ENCODE measurements at regions of chr19 and their contacts with region 1.

Region 1: GRCh38 chr19:35140962-35141637 is 2.0 kb upstream of the FXYD7 start:
- DNase-seq: peak; percentile 98
- ATAC-seq: peak; percentile 96
- H3K4me3 Mint-ChIP-seq: peak overlapping the region; percentile 74
- H3K27ac Mint-ChIP-seq: peak overlapping the region; percentile 26
- H3K4me1 Mint-ChIP-seq: peaks cover 32% of the 10 kb centered on the region
- H3K27me3 Mint-ChIP-seq: peaks cover 7% of the 10 kb centered on the region
- CTCF ChIP-seq: peak; percentile 39

Region 2: DNA sequence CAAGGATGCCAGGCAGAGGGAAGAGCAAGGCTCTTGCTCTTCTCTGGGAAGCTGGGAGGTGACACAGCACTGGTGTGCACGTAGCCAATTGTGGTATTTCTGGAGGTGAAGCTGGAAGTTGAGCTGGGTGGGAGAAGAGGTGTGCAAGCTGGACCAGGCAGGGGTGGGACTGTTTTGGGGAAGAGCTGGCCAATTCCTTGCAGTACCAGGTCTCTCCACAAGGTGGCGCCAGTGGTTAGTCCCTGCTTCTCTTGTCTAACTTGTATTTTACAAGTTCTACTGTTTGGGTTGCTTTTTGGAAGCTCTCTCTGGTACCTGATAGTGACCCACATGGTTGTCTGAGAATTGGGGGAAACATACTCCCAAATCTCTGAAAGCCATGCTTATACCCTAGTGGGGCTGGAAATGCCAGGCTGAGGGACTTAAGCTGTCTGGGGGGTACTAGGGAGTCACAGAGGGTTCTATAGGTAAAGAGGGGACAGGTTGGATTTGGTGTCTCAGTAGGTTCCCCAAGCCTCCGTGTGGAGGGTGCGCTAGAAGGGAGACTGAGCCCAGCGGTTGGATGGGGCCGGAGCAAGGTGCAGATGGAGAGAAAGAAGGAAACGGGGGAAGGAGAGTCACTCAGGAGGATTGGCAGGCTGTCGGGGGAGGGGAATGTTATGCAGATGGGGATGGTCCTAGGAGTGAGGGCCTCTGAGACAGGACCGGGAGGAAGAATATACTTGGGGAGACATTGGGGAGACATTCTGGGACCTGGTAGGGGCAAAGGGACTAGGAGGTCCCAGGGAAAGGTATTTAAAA is 96.6 kb before region 1 on chr19:
- CTCF ChIA-PET with region 1: interaction called, 12 read pairs
- POLR2A ChIA-PET with region 1: interaction called, 3 read pairs
- intact Hi-C with region 1: no loop called
- DNase-seq: peak; percentile 69
- ATAC-seq: no peak
- H3K4me3 Mint-ChIP-seq: no peak overlapping the region
- H3K27ac Mint-ChIP-seq: no peak overlapping the region
- H3K4me1 Mint-ChIP-seq: peaks cover 13% of the 10 kb centered on the region
- H3K27me3 Mint-ChIP-seq: peaks cover 6% of the 10 kb centered on the region
- CTCF ChIP-seq: peak; percentile 98

Region 3: GRCh38 chr19:35055715-35056179 is 85.4 kb before region 1 on chr19:
- CTCF ChIA-PET with region 1: interaction called, 10 read pairs
- POLR2A ChIA-PET with region 1: no interaction called
- intact Hi-C with region 1: no loop called
- DNase-seq: peak; percentile 46
- ATAC-seq: peak; percentile 66
- H3K4me3 Mint-ChIP-seq: no peak overlapping the region
- H3K27ac Mint-ChIP-seq: no peak overlapping the region
- H3K4me1 Mint-ChIP-seq: no peaks in the 10 kb centered on the region
- H3K27me3 Mint-ChIP-seq: no peaks in the 10 kb centered on the region
- CTCF ChIP-seq: peak; percentile 14

Region 4: DNA sequence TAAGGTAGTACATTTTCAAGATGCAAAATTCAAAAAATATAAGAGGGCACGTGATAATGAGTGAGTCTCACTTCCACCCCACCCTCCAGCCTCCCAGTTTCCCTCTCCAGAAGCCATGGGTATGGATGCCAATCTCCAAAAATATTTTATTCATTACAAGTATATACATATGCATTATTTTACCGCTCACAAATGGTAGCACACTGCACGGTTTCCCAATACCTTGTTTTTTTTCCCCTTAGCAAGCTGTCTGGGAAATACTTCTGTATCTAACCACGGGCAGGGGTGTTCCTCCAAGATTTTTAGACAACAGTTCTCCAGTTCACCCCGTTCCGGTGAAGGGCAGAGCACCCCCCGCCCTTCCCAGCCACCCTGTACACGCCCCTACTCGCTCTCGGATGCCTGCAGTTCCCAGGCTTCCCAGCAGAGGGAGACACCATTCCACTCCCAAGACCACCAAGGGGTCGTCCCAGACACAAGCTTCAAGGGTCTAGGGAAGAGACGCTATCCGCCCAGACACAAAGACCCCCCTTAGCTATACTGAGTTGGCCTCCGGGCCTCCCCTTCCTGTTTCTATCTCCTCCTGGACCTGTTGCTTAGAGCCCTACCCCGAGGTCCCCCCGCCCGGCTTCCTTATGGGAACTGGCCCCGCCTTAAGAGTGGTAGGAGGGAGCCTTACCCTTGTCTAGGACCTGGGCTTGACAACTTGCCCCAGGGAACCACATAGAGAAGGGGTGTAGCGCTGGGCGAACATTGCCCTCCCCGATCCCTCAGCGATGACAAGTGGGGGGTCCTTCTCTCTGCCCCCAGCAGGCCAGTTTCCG is 26.5 kb before region 1 on chr19:
- CTCF ChIA-PET with region 1: interaction called, 11 read pairs
- POLR2A ChIA-PET with region 1: no interaction called
- intact Hi-C with region 1: no loop called
- DNase-seq: peak; percentile 82
- ATAC-seq: peak; percentile 97
- H3K4me3 Mint-ChIP-seq: peak overlapping the region; percentile 19
- H3K27ac Mint-ChIP-seq: no peak overlapping the region
- H3K4me1 Mint-ChIP-seq: peaks cover 5% of the 10 kb centered on the region
- H3K27me3 Mint-ChIP-seq: no peaks in the 10 kb centered on the region
- CTCF ChIP-seq: peak; percentile 99

Region 5: GRCh38 chr19:35130761-35131735 is 10.1 kb before region 1 on chr19:
- CTCF ChIA-PET with region 1: no interaction called
- POLR2A ChIA-PET with region 1: no interaction called
- intact Hi-C with region 1: no loop called
- DNase-seq: no peak
- ATAC-seq: no peak
- H3K4me3 Mint-ChIP-seq: no peak overlapping the region
- H3K27ac Mint-ChIP-seq: no peak overlapping the region
- H3K4me1 Mint-ChIP-seq: peaks cover 4% of the 10 kb centered on the region
- H3K27me3 Mint-ChIP-seq: no peaks in the 10 kb centered on the region
- CTCF ChIP-seq: no peak

Region 6: DNA sequence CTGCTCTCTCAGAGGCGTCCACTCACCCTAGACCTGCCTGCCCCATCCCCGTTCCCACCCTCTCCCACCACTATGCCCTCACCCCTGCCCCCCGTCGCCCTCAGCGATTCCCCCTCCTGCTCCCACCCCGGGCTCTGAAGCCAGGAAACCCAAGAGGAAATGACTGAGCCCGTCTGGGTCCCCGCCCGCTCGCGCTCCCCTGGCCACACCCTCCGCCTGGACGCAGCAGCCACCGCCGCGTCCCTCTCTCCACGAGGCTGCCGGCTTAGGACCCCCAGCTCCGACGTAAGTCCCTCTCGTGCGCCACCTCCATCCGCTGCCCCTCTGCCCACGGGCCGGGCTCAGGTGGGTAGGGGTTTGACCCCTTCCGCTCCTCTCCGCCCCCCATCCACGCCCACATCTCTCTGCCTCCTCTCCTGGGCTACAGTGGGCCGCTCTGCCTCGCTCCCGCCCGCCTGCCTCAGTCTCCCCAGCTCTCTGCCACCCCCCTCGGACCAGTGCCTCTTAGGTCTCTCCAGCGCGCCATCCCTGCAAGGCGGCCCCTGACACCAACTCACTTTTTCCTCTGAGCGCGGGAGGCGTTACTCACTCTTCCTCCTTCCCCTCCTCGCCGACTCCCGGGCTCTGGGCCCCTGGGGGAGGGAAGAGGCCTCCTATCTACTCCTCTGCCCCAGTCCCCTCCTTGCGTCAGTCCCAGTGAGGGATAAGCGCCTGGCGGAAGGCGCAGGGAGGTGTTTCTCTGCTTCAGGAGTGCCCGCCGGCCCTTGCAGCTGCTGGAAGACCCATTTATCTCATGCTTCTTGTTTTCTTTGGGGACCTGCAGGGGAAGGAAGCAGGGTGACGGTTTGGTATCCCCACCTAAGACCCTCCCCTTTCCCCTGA is 13.7 kb after region 1 on chr19 and contains the start of gene FXYD5:
- CTCF ChIA-PET with region 1: interaction called, 57 read pairs
- POLR2A ChIA-PET with region 1: interaction called, 10 read pairs
- intact Hi-C with region 1: no loop called
- DNase-seq: peak; percentile 92
- ATAC-seq: peak; percentile 78
- H3K4me3 Mint-ChIP-seq: peak within 1 kb of the TSS; percentile 95
- H3K27ac Mint-ChIP-seq: peak within 1 kb of the TSS; percentile 99
- H3K4me1 Mint-ChIP-seq: peaks cover 49% of the 10 kb centered on the region
- H3K27me3 Mint-ChIP-seq: no peaks in the 10 kb centered on the region
- CTCF ChIP-seq: no peak
- total RNA-seq, gene FXYD5: 225 to 241 TPM

Region 7: DNA sequence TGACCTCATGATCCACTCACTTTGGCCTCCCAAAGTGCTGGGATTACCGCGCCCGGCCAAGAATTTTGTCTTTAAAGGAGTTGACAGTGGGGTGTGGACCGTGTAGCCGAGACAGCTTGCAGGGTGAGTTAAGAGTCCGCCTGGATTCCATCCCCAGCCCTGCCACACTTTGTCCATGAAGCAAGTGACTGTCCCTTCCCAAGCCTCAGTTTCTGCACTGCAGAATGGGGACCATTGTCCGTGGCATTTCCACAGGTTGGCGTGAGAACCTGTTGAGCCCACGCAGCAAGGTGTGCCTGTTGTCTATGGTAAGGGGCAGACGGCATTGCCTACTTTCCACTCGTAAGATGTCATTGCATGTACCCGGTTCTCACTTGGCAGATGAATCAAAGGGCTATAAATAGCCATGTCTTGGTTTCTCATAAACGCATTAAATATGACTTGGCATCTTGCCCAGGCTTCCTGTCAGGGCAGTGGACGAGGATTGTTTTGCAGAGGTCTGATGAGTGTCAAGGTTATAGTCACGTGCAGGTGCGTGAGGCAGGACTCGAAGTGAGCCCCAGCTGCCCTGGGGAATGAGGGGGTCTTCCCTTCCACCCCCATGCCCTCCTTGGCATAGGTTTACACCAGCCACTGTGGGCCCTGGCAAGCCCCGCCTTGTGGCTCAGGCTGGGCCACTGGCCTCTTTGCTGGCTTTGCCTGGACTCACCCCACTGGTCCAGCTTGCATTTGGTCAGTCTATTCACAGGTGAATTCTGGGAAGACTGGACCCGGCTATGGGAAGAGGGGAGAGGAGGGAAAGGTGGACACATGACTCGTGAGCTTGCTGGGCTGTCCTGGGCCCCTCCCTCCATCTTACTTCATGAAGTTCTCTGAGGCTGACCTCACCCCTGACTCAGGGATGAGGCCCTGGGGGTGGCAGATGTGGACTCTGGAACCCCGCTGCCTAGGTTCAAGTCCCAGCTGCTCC is 72.8 kb after region 1 on chr19:
- CTCF ChIA-PET with region 1: interaction called, 24 read pairs
- POLR2A ChIA-PET with region 1: interaction called, 5 read pairs
- intact Hi-C with region 1: loop called (anchors 5 kb)
- DNase-seq: peak; percentile 93
- ATAC-seq: peak; percentile 61
- H3K4me3 Mint-ChIP-seq: peak overlapping the region; percentile 47
- H3K27ac Mint-ChIP-seq: peak overlapping the region; percentile 98
- H3K4me1 Mint-ChIP-seq: peaks cover 56% of the 10 kb centered on the region
- H3K27me3 Mint-ChIP-seq: no peaks in the 10 kb centered on the region
- CTCF ChIP-seq: no peak

Region 8: GRCh38 chr19:35269421-35270117 is 128.5 kb after region 1 on chr19:
- CTCF ChIA-PET with region 1: interaction called, 8 read pairs
- POLR2A ChIA-PET with region 1: interaction called, 4 read pairs
- intact Hi-C with region 1: loop called (anchors 10 kb)
- DNase-seq: peak; percentile 84
- ATAC-seq: peak; percentile 63
- H3K4me3 Mint-ChIP-seq: peak overlapping the region; percentile 63
- H3K27ac Mint-ChIP-seq: peak overlapping the region; percentile 38
- H3K4me1 Mint-ChIP-seq: peaks cover 28% of the 10 kb centered on the region
- H3K27me3 Mint-ChIP-seq: no peaks in the 10 kb centered on the region
- CTCF ChIP-seq: peak; percentile 96